H1 (cell line): ENCODE measurements at regions of chr3 and their contacts with region 1.

Region 1: GRCh38 chr3:99789011-99789721 is 28.5 kb upstream of the CMSS1 start:
- DNase-seq: no peak
- H3K4me3 ChIP-seq: no peak overlapping the region
- H3K27ac ChIP-seq: no peak overlapping the region
- H3K4me1 ChIP-seq: no peaks in the 10 kb centered on the region
- H3K27me3 ChIP-seq: no peaks in the 10 kb centered on the region
- CTCF ChIP-seq: peak in 2 of 3 experiments; percentile 49 to 65; a peak in 3 of 4 replicates
- EP300 ChIP-seq: no peak
- POLR2A ChIP-seq: no peak
- RAD21 ChIP-seq: peak; percentile 71 to 77

Region 2: GRCh38 chr3:99213019-99213418 is 576.1 kb before region 1 on chr3:
- CTCF ChIA-PET with region 1: no interaction called
- POLR2A ChIA-PET with region 1: no interaction called
- DNase-seq: no peak
- H3K4me3 ChIP-seq: no peak overlapping the region
- H3K27ac ChIP-seq: no peak overlapping the region
- H3K4me1 ChIP-seq: no peaks in the 10 kb centered on the region
- H3K27me3 ChIP-seq: no peaks in the 10 kb centered on the region
- CTCF ChIP-seq: no peak
- EP300 ChIP-seq: no peak
- POLR2A ChIP-seq: no peak
- RAD21 ChIP-seq: no peak

Region 3: GRCh38 chr3:99776516-99777209 is 12.5 kb before region 1 on chr3:
- CTCF ChIA-PET with region 1: interaction called, 15 read pairs
- POLR2A ChIA-PET with region 1: no interaction called
- DNase-seq: no peak
- H3K4me3 ChIP-seq: no peak overlapping the region
- H3K27ac ChIP-seq: no peak overlapping the region
- H3K4me1 ChIP-seq: peaks cover 0 to 6% (median 0%) of the 10 kb centered on the region in 4 experiments; a peak in 1 of 7 replicates
- H3K27me3 ChIP-seq: no peaks in the 10 kb centered on the region
- CTCF ChIP-seq: no peak
- EP300 ChIP-seq: no peak
- POLR2A ChIP-seq: no peak
- RAD21 ChIP-seq: no peak

Region 4: DNA sequence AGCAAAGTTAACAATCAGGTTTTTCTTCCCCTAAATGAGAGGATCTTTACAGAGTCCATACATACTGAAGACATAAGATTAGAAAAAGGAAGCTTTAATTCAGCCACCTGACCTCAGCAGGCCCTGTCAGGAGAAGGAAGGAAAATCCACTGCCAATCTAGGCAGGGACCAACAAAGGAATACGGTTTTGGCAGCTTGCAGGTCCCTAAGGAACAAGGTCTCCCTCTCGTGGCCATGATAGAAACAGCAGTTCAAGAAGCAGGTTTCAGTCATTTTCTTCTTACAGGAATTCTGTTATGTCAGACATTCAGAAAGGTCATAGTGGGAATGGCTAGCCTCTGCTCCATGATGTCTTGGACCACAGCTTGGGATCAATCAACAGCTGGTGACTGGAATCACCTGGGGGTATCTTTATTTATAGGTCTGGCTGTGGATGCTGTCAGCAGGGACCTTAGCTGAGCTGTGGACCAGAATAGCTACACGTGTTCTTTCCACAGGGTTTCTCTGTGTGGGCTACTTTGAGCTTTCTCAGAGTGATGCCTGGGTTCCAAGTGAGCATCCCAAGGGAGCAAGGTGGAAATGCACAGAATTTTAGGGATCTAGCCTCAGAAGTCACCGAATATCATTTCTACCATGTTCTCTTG is 19.1 kb after region 1 on chr3:
- CTCF ChIA-PET with region 1: interaction called, 10 read pairs
- POLR2A ChIA-PET with region 1: no interaction called
- DNase-seq: peak in 1 of 2 experiments; percentile 73
- H3K4me3 ChIP-seq: no peak overlapping the region
- H3K27ac ChIP-seq: no peak overlapping the region
- H3K4me1 ChIP-seq: no peaks in the 10 kb centered on the region
- H3K27me3 ChIP-seq: no peaks in the 10 kb centered on the region
- CTCF ChIP-seq: peak; percentile 38 to 93 (median 61)
- EP300 ChIP-seq: no peak
- POLR2A ChIP-seq: no peak
- RAD21 ChIP-seq: peak; percentile 73 to 79